Ovary (tissue), 10 donors: ENCODE measurements at regions of chr11 and their contacts with region 1.

Region 1: DNA sequence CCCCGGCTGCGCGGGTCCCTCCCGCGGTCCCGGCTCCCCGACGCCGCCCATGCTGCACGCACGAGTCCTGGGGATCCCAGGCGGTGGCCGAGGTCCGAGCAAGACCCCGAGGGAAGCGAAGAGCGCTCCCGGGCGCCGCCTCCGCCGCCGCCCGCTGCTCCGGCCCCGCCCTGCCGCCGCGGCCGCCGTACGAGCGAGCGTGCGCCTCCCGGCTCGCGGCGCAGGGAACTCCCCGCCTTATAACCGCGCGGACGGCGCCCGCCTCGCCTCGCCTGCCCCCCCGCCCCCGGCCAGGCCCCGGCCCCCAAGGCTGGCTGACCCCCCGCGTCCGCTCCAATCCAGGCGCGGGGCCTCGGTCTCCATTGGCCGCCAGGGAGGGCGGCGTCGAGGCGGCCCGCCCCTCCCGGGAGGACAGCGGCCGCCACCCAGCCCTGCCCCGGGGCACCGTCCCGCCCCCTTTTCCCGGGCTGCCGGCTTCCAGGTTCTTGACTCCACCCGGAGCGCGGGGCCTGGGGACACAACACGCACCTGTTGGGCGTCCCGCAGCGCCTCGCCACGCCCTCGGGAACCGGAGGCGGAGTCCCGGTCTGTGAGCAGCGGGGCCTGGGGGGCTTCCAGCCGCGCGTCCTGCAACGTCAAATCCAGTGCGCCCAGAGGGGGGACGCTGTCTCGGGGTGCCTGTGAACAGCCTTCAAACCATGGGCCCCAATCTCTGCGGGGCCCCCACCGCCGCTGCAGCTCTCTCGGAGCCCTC is at the start of gene FADS3:
- DNase-seq: peak; percentile 84 to 88 (median 87)
- H3K4me3 ChIP-seq: peak within 1 kb of the TSS; percentile 75
- H3K27ac ChIP-seq: peak within 1 kb of the TSS; percentile 83
- H3K4me1 ChIP-seq: peaks cover 5% of the 10 kb centered on the region
- H3K27me3 ChIP-seq: no peaks in the 10 kb centered on the region
- CTCF ChIP-seq: no peak
- EP300 ChIP-seq: no peak
- POLR2A ChIP-seq: peak; percentile 36
- total RNA-seq, gene FADS3: 21.9 to 85.8 (median 41.3) TPM

Region 2: DNA sequence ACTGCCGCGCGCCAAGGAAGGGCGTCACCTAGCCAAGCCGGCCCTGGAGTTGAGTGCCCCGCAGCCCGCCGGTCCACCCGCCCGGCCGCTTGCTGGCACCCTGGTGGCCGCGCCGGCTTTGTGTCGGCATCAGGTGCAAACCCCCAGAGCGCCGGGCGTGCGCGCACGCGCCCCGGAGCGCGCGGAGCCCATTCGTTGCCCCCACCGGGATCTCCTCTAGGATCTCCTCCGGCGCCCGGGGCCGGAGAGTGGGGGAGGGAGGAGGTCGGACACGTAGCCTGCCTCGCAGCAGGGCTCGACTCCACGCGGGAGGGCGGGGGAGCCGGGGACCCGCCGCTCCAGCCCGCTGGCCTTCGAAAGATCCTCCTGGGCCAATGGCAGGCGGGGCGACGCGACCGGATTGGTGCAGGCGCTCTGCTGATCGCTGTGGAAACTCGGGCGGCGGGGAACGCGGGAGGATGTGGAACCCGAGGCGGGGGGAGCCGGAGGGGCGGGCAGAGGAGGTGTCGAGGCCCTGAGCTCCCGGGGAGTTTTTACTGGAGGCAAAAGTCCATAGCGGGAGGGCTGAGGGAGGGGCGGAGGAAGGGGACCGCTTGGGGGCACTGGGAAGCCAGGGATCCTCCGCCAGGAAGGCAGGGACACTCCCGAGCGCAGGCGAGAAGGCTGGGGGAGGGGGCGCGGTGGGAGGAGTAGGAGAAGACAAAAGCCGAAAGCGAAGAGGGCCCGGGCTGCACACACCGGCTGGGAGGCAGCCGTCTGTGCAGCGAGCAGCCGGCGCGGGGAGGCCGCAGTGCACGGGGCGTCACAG is 63.7 kb before region 1 on chr11 and contains the start of gene FADS2:
- intact Hi-C with region 1: loop called in 1 of 4 experiments (anchors 2 kb)
- DNase-seq: peak; percentile 84 to 89 (median 86)
- H3K4me3 ChIP-seq: peak within 1 kb of the TSS; percentile 49
- H3K27ac ChIP-seq: peak within 1 kb of the TSS; percentile 59 to 71
- H3K4me1 ChIP-seq: peaks cover 8% of the 10 kb centered on the region
- H3K27me3 ChIP-seq: no peaks in the 10 kb centered on the region
- CTCF ChIP-seq: peak in 1 of 3 donors; percentile 14
- EP300 ChIP-seq: no peak
- POLR2A ChIP-seq: no peak
- total RNA-seq, gene FADS2: 6.3 to 298 (median 26.2) TPM